ENCODE measurements at regions of chr18 and their contacts with region 1.

Region 1: GRCh38 chr18:79378542-79379250 is 17.0 kb upstream of the NFATC1 start:
- DNase-seq: peak; percentile 71
- H3K4me3 ChIP-seq: no peak overlapping the region
- H3K27ac ChIP-seq: no peak overlapping the region
- H3K4me1 ChIP-seq: no peaks in the 10 kb centered on the region
- H3K27me3 ChIP-seq: no peaks in the 10 kb centered on the region
- CTCF ChIP-seq: peak; percentile 80 to 97

Region 2: DNA sequence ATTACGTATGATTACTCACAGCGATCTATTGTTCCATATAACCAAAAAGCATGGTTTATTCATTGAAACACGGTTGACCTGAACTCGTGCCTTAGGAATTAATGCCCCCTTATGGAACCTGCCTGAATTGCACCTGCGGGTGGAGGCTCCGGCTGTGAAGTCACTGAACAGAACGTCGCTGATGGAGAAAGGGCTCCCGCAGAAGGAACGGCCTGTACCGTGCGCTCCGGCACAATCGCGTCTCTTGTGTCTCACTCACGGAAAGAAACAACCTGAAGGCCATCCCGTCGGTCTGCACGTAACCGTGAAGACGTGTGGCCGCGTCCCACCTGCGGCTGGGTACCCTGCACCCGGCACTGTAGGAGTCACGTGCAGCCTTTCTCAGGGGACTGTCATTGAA is 150.2 kb after region 1 on chr18:
- CTCF ChIA-PET with region 1: no interaction called
- dilution Hi-C with region 1: no loop called
- in situ Hi-C with region 1: no loop called
- intact Hi-C with region 1: loop called (anchors 1 kb)
- DNase-seq: peak; percentile 20
- H3K4me3 ChIP-seq: no peak overlapping the region
- H3K27ac ChIP-seq: no peak overlapping the region
- H3K4me1 ChIP-seq: no peaks in the 10 kb centered on the region
- H3K27me3 ChIP-seq: no peaks in the 10 kb centered on the region
- CTCF ChIP-seq: peak; percentile 51 to 53

Region 3: DNA sequence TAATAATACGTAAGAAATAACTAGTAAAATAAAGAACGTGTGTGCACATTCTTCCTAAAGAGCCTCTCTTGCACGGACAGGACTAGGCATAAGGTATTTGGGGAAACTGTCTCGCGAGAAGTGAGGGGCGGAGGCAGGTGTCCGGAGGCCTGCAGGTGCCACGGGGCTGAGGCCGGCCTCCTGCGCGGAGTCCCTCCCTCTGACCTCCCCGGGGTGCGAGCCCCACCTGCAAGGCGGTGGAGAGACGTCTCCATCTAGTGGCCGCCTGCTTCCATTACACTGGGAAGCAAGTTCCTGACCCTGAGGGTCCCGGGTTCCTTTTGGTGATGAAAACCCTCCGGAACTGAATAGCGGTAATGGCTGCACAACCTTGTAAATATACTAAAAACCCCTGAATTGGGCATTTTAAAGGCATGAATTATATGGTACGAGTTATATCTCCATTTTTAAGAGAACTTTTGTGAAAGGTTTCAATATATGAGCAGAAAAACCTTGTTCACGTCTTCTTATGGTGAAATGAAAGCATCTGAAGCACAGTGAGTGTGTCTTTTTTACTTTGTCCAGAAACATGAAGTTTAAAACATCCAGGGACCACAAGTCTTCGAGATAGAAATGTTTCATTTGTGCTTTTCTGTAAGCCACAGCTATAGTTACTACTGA is 265.4 kb after region 1 on chr18:
- CTCF ChIA-PET with region 1: no interaction called
- dilution Hi-C with region 1: no loop called
- in situ Hi-C with region 1: loop called (anchors 5 to 10 kb)
- intact Hi-C with region 1: loop called (anchors 1 kb)
- DNase-seq: peak; percentile 32
- H3K4me3 ChIP-seq: no peak overlapping the region
- H3K27ac ChIP-seq: no peak overlapping the region
- H3K4me1 ChIP-seq: no peaks in the 10 kb centered on the region
- H3K27me3 ChIP-seq: no peaks in the 10 kb centered on the region
- CTCF ChIP-seq: peak; percentile 77 to 96

Region 4: GRCh38 chr18:80171054-80171872 is 792.6 kb after region 1 on chr18:
- CTCF ChIA-PET with region 1: no interaction called
- dilution Hi-C with region 1: no loop called
- in situ Hi-C with region 1: no loop called
- intact Hi-C with region 1: loop called (anchors 5 kb)
- DNase-seq: peak; percentile 38
- H3K4me3 ChIP-seq: peak overlapping the region in 1 of 3 experiments; percentile 30
- H3K27ac ChIP-seq: no peak overlapping the region
- H3K4me1 ChIP-seq: peaks cover 30% of the 10 kb centered on the region
- H3K27me3 ChIP-seq: no peaks in the 10 kb centered on the region
- CTCF ChIP-seq: peak; percentile 85 to 98